ENCODE measurements at regions of chr9 and their contacts with region 1.

Region 1: GRCh38 chr9:119477197-119477596 is 108.0 kb upstream of the BRINP1 start:
- DNase-seq: no peak
- H3K4me3 ChIP-seq: no peak overlapping the region
- H3K27ac ChIP-seq: no peak overlapping the region
- H3K4me1 ChIP-seq: no peaks in the 10 kb centered on the region
- H3K27me3 ChIP-seq: no peaks in the 10 kb centered on the region
- CTCF ChIP-seq: no peak
- POLR2A ChIP-seq: no peak

Region 2: GRCh38 chr9:119365291-119366027 is 111.7 kb before region 1 on chr9:
- intact Hi-C with region 1: no loop called
- DNase-seq: no peak
- H3K4me3 ChIP-seq: no peak overlapping the region
- H3K27ac ChIP-seq: no peak overlapping the region
- H3K4me1 ChIP-seq: peaks cover 0 to 20% (median 10%) of the 10 kb centered on the region in 3 donors
- H3K27me3 ChIP-seq: peaks cover 0 to 48% (median 10%) of the 10 kb centered on the region in 4 donors
- CTCF ChIP-seq: peak in 3 of 6 experiments; percentile 40 to 59 (median 43)
- POLR2A ChIP-seq: no peak

Region 3: GRCh38 chr9:119533504-119533903 is 56.3 kb after region 1 on chr9:
- intact Hi-C with region 1: loop called (anchors 10 kb)
- DNase-seq: no peak
- H3K4me3 ChIP-seq: no peak overlapping the region
- H3K27ac ChIP-seq: no peak overlapping the region
- H3K4me1 ChIP-seq: no peaks in the 10 kb centered on the region
- H3K27me3 ChIP-seq: peaks cover 0 to 4% (median 0%) of the 10 kb centered on the region in 4 donors
- CTCF ChIP-seq: no peak
- POLR2A ChIP-seq: no peak